PC-3 (cell line): ENCODE measurements at regions of chr5 and their contacts with region 1.

Region 1: DNA sequence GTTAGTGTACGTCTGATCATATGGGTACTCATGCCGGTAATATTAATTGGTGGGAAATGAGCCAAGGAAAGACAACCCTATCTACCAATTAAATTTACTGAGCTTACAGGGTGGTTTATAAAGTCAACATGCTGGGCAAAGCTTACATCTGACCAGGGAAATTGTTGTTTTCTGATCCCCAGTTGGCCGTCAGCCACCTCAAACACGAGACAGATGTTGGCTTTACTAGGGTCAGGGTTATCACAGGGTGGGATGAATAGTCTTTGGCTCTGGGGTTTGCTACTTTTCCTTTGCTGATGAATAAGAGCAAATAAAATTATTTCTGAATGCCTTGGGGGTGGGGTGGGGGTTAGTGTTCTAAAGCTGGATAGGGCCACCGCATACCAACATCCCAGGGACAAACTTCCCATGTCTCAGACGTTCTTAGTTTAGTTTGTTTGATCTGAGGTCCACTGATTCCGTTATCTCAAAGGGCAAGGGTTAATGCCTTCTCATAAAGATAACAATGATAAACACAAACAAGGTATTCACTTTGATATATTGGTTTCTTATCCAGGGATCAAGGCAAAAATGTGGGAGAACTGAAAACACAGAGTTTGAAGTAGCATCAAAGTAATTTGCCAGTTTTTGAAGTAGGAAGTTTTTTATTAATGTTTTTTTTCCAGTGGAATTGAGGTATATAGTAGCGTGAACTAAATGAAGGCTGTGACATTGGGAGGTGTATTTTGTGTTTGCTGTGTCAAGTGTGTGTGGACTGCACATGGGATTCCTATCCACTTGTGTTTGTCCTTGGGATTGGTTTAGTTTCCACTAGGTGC is 109.1 kb upstream of the RPS23 start:
- DNase-seq: peak; percentile 93
- ATAC-seq: peak; percentile 74
- H3K4me3 ChIP-seq: no peak overlapping the region
- H3K27ac ChIP-seq: peak overlapping the region; percentile 99
- H3K4me1 ChIP-seq: peaks cover 38% of the 10 kb centered on the region
- H3K27me3 ChIP-seq: no peaks in the 10 kb centered on the region
- CTCF ChIP-seq: no peak

Region 2: DNA sequence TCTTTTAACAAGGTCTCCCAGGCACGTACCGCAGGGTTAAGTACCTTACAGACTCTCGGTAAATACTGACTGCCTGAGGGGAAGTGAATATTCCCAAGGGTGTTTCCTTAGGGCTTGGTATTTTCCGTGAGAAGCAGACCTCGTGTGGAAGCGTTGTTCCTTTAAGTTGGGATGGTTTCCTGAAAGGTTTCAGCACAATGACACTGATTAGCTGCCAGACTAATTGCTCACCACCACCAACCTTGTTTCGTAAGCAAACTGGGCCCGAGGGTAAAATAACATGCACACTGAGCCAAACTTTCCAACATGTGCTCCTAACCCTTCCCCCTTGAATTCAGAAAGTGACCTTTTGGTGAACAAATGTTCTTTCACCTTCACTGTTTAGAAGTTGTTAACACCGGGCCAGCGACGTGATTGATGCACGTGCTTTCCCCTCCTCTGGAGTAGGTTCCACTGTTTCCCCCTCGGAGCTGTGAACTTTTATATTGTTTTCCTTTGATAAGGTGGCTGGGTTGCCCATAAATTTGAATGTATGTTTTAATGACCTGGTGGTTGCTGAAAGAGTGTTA is 19.1 kb after region 1 on chr5:
- CTCF ChIA-PET with region 1: no interaction called
- POLR2A ChIA-PET with region 1: no interaction called
- intact Hi-C with region 1: loop called (anchors 1 kb)
- DNase-seq: peak; percentile 93
- ATAC-seq: peak; percentile 79
- H3K4me3 ChIP-seq: peak overlapping the region; percentile 19; the same call in 1 of the 2 replicates
- H3K27ac ChIP-seq: peak overlapping the region; percentile 98
- H3K4me1 ChIP-seq: peaks cover 28% of the 10 kb centered on the region
- H3K27me3 ChIP-seq: no peaks in the 10 kb centered on the region
- CTCF ChIP-seq: no peak

Region 3: DNA sequence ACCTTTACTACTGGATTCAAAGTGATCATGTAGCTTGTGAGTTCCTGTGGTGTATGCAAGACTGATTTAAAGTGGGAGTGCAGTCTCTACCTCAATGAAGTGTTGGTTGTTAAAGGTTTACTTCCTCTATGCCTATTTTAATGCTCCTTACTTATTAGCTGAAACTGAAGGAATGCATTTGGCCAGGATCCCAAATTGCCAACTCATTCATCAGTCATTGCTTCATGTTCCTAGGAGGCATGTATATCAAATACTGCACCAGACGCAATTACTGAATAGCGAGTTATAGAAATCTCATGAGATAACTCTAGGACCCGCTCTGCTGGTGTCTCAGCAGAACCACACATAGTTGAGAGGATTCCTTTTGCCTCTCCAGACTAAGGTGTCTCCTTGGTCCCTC is 33.9 kb after region 1 on chr5:
- CTCF ChIA-PET with region 1: interaction called, 5 read pairs
- POLR2A ChIA-PET with region 1: no interaction called
- intact Hi-C with region 1: loop called (anchors 2 kb)
- DNase-seq: peak; percentile 98
- ATAC-seq: peak; percentile 98
- H3K4me3 ChIP-seq: no peak overlapping the region
- H3K27ac ChIP-seq: peak overlapping the region; percentile 70
- H3K4me1 ChIP-seq: peaks cover 26% of the 10 kb centered on the region
- H3K27me3 ChIP-seq: no peaks in the 10 kb centered on the region
- CTCF ChIP-seq: peak; percentile 58

Region 4: GRCh38 chr5:82967072-82967471 is 579.9 kb after region 1 on chr5:
- CTCF ChIA-PET with region 1: no interaction called
- POLR2A ChIA-PET with region 1: no interaction called
- intact Hi-C with region 1: no loop called
- DNase-seq: no peak
- ATAC-seq: no peak
- H3K4me3 ChIP-seq: no peak overlapping the region
- H3K27ac ChIP-seq: no peak overlapping the region
- H3K4me1 ChIP-seq: peaks cover 14% of the 10 kb centered on the region
- H3K27me3 ChIP-seq: no peaks in the 10 kb centered on the region
- CTCF ChIP-seq: no peak